RWPE1 (cell line): ENCODE measurements at regions of chr3 and their contacts with region 1.

Region 1: GRCh38 chr3:194315088-194315964 is 35.8 kb downstream of the CPN2 start:
- DNase-seq: peak; percentile 82
- H3K27ac ChIP-seq: peak overlapping the region; percentile 80
- CTCF ChIP-seq: peak; percentile 91

Region 2: GRCh38 chr3:193665370-193665989 is 649.8 kb before region 1 on chr3:
- CTCF ChIA-PET with region 1: interaction called, 10 read pairs
- POLR2A ChIA-PET with region 1: no interaction called
- DNase-seq: peak; percentile 20
- H3K27ac ChIP-seq: no peak overlapping the region
- CTCF ChIP-seq: peak; percentile 58

Region 3: GRCh38 chr3:193780810-193781472 is 534.4 kb before region 1 on chr3:
- CTCF ChIA-PET with region 1: interaction called, 42 read pairs
- POLR2A ChIA-PET with region 1: interaction called, 3 read pairs
- DNase-seq: peak; percentile 97
- H3K27ac ChIP-seq: peak overlapping the region; percentile 95
- CTCF ChIP-seq: peak; percentile 89

Region 4: GRCh38 chr3:194134757-194135528 is 180.4 kb before region 1 on chr3:
- CTCF ChIA-PET with region 1: interaction called, 39 read pairs
- POLR2A ChIA-PET with region 1: no interaction called
- DNase-seq: peak; percentile 93
- H3K27ac ChIP-seq: peak overlapping the region; percentile 97
- CTCF ChIP-seq: no peak

Region 5: DNA sequence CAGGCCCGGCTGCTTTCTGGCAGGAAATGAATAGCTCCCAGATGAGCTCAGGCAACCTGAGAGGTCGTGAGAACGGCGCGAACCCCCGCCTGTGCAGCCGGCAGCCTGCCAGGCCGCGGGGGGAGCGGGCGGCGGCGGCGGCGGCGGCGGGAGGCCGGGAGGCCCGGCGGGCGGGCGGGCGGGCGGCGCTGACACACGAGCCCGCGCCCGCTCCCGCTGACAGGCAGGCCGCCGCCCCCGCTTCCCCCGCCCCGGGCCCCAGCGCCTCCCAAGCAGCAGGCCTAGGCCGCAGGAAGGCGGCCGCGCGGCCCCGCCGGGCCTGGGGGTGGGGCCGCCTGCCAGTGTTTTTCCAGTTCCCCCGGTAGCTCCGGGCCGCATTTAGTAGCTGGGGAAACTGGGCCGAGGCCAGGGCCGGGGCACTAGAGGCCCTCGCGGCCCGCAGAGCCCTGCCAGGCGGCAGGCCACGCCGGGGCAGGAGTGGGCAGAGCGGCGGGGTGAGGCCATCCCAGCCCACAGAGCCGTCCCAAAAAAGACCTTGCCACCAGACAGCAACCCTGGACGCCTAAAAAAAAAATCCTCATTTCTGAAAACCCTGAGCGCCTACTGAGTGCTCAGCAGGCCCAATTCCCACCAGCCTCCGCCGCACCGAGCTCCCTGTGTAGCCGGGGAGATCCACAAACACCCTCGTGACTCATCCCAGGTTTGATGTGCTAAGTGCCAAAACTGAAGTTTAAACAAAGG is 173.7 kb before region 1 on chr3:
- CTCF ChIA-PET with region 1: interaction called, 39 read pairs
- POLR2A ChIA-PET with region 1: no interaction called
- DNase-seq: peak; percentile 93
- H3K27ac ChIP-seq: peak overlapping the region; percentile 100
- CTCF ChIP-seq: no peak

Region 6: GRCh38 chr3:194333212-194333980 is 18.1 kb after region 1 on chr3:
- CTCF ChIA-PET with region 1: interaction called, 11 read pairs
- POLR2A ChIA-PET with region 1: no interaction called
- DNase-seq: peak; percentile 64
- H3K27ac ChIP-seq: peak overlapping the region; percentile 92
- CTCF ChIP-seq: peak; percentile 96

Region 7: DNA sequence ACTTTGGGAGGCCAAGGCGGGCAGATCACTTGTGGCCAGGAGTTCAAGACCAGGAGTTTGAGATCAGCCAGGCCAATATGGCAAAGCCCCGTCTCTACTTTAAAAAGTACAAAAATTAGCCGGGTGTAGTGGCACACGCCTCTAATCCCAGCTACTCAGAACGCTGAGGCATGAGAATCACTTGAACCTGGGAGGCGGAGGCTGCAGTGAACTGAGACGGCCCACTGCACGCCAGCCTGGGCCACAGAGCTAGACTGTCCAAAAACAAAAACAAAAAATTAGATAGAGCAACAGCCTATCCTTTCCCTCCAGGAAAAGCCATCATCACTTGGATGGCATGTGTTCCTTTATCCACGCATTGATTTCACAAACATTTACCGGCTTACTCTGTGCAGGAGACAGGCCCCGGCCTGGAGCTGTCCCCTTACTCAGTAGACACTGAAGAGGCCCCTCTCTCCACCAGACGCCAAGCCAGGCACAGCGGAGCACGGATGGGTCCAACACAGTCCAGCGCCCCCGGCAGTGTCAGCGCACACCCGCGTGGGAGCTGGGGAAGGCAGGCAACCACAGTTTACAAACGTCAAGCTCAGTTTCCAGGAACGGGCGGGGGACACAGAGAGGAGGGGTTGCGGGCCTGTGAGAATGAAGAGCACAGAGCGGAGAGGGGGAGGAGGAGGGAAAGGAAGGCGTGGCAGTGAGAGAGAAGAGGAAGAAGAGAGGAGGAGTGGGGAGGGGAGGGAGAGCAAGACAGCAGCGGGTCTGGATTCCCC is 80.6 kb after region 1 on chr3:
- CTCF ChIA-PET with region 1: no interaction called
- POLR2A ChIA-PET with region 1: no interaction called
- DNase-seq: no peak
- H3K27ac ChIP-seq: no peak overlapping the region
- CTCF ChIP-seq: no peak